Natural killer cell (primary cell): ENCODE measurements at regions of chr9 and their contacts with region 1.

Region 1: GRCh38 chr9:123349691-123350480 is 6.1 kb upstream of the CRB2 start:
- DNase-seq: peak; percentile 45 to 81
- ATAC-seq: peak; percentile 70 to 93 (median 87)
- H3K4me3 ChIP-seq: no peak overlapping the region
- H3K4me3 Mint-ChIP-seq: no peak overlapping the region
- H3K27ac ChIP-seq: no peak overlapping the region
- H3K27ac Mint-ChIP-seq: no peak overlapping the region
- H3K4me1 ChIP-seq: peaks cover 12% of the 10 kb centered on the region
- H3K4me1 Mint-ChIP-seq: peaks cover 0 to 6% of the 10 kb centered on the region in 2 donors
- H3K27me3 ChIP-seq: no peaks in the 10 kb centered on the region
- H3K27me3 Mint-ChIP-seq: peaks cover 0 to 16% of the 10 kb centered on the region in 2 donors
- CTCF ChIP-seq: peak; percentile 95

Region 2: GRCh38 chr9:122827761-122828093 is 522.2 kb before region 1 on chr9:
- intact Hi-C with region 1: loop called (anchors 10 kb)
- DNase-seq: no peak
- ATAC-seq: no peak
- H3K4me3 ChIP-seq: peak overlapping the region; percentile 87
- H3K4me3 Mint-ChIP-seq: peak overlapping the region; percentile 98
- H3K27ac ChIP-seq: peak overlapping the region; percentile 72
- H3K27ac Mint-ChIP-seq: peak overlapping the region; percentile 84 to 98
- H3K4me1 ChIP-seq: peaks cover 26% of the 10 kb centered on the region
- H3K4me1 Mint-ChIP-seq: peaks cover 44% of the 10 kb centered on the region in 2 donors
- H3K27me3 ChIP-seq: no peaks in the 10 kb centered on the region
- H3K27me3 Mint-ChIP-seq: no peaks in the 10 kb centered on the region
- CTCF ChIP-seq: no peak

Region 3: DNA sequence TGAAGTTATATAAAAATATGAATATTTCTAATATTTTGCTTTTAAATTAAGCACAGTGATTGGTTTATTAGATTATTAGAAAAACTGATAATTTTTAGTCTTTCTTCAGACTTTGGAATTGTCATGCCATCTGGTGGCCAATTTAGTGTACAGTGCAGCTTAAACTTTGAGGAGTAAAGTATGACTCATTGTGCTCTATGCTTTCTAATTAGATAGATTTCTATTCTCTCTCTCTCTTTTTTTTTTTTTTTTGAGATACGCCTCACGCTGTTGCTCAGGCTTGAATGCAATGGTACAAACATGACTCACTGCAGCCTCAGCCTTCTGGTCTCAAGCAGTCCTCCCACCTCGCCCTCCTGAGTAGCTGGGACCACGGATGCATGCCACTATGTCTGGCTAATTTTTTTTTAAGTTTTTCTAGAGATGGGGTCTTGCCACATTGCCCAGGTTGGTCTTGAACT is 358.5 kb before region 1 on chr9:
- intact Hi-C with region 1: loop called (anchors 5 kb)
- DNase-seq: peak in 1 of 2 donors; percentile 68
- ATAC-seq: peak; percentile 69 to 85 (median 73)
- H3K4me3 ChIP-seq: no peak overlapping the region
- H3K4me3 Mint-ChIP-seq: no peak overlapping the region
- H3K27ac ChIP-seq: no peak overlapping the region
- H3K27ac Mint-ChIP-seq: no peak overlapping the region
- H3K4me1 ChIP-seq: no peaks in the 10 kb centered on the region
- H3K4me1 Mint-ChIP-seq: peaks cover 6% of the 10 kb centered on the region in 2 donors
- H3K27me3 ChIP-seq: no peaks in the 10 kb centered on the region
- H3K27me3 Mint-ChIP-seq: no peaks in the 10 kb centered on the region
- CTCF ChIP-seq: peak; percentile 72

Region 4: GRCh38 chr9:123081824-123082223 is 268.1 kb before region 1 on chr9:
- intact Hi-C with region 1: loop called (anchors 1 kb)
- DNase-seq: peak in 1 of 2 donors; percentile 60
- ATAC-seq: no peak
- H3K4me3 ChIP-seq: no peak overlapping the region
- H3K4me3 Mint-ChIP-seq: no peak overlapping the region
- H3K27ac ChIP-seq: no peak overlapping the region
- H3K27ac Mint-ChIP-seq: no peak overlapping the region
- H3K4me1 ChIP-seq: no peaks in the 10 kb centered on the region
- H3K4me1 Mint-ChIP-seq: no peaks in the 10 kb centered on the region
- H3K27me3 ChIP-seq: no peaks in the 10 kb centered on the region
- H3K27me3 Mint-ChIP-seq: no peaks in the 10 kb centered on the region
- CTCF ChIP-seq: peak; percentile 44

Region 5: DNA sequence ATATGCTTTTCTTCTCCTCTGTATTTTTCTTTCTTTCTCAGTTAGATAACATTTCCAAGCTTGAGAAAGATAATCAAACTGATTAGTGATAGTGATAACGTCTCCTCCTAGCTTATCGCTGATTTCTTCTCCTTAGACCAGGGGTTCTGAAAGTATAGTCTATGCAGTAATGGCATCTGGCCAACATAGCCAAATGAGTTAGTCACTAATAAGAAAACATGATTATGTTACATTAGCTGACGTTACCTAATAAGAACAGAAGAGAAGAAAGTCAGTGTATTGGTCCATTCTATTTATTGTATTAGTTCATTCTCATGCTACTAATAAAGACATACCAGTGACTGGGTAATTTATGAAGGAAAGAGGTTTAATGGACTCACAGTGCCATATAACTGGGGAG is 192.7 kb before region 1 on chr9:
- intact Hi-C with region 1: no loop called
- DNase-seq: no peak
- ATAC-seq: no peak
- H3K4me3 ChIP-seq: no peak overlapping the region
- H3K4me3 Mint-ChIP-seq: no peak overlapping the region
- H3K27ac ChIP-seq: no peak overlapping the region
- H3K27ac Mint-ChIP-seq: no peak overlapping the region
- H3K4me1 ChIP-seq: no peaks in the 10 kb centered on the region
- H3K4me1 Mint-ChIP-seq: no peaks in the 10 kb centered on the region
- H3K27me3 ChIP-seq: no peaks in the 10 kb centered on the region
- H3K27me3 Mint-ChIP-seq: no peaks in the 10 kb centered on the region
- CTCF ChIP-seq: no peak

Region 6: GRCh38 chr9:123389070-123389469 is 39.2 kb after region 1 on chr9:
- intact Hi-C with region 1: loop called (anchors 1 kb)
- DNase-seq: no peak
- ATAC-seq: no peak
- H3K4me3 ChIP-seq: no peak overlapping the region
- H3K4me3 Mint-ChIP-seq: no peak overlapping the region
- H3K27ac ChIP-seq: no peak overlapping the region
- H3K27ac Mint-ChIP-seq: no peak overlapping the region
- H3K4me1 ChIP-seq: no peaks in the 10 kb centered on the region
- H3K4me1 Mint-ChIP-seq: no peaks in the 10 kb centered on the region
- H3K27me3 ChIP-seq: no peaks in the 10 kb centered on the region
- H3K27me3 Mint-ChIP-seq: no peaks in the 10 kb centered on the region
- CTCF ChIP-seq: no peak